Activated CD4-positive, alpha-beta memory T cell treated with anti-CD3 and anti-CD28 coated beads, Interleukin-2, amount 10 ng/mL, durations not matched to agents 7 days and 5 days (primary cell): ENCODE measurements at regions of chr20 and their contacts with region 1.

Region 1: GRCh38 chr20:46022411-46023147 is 6.4 kb upstream of the SLC12A5 start:
- DNase-seq: peak; percentile 77
- H3K4me3 Mint-ChIP-seq: peak overlapping the region; percentile 59
- H3K27ac Mint-ChIP-seq: no peak overlapping the region
- H3K4me1 Mint-ChIP-seq: peaks cover 24% of the 10 kb centered on the region
- H3K27me3 Mint-ChIP-seq: peaks cover 49% of the 10 kb centered on the region

Region 2: DNA sequence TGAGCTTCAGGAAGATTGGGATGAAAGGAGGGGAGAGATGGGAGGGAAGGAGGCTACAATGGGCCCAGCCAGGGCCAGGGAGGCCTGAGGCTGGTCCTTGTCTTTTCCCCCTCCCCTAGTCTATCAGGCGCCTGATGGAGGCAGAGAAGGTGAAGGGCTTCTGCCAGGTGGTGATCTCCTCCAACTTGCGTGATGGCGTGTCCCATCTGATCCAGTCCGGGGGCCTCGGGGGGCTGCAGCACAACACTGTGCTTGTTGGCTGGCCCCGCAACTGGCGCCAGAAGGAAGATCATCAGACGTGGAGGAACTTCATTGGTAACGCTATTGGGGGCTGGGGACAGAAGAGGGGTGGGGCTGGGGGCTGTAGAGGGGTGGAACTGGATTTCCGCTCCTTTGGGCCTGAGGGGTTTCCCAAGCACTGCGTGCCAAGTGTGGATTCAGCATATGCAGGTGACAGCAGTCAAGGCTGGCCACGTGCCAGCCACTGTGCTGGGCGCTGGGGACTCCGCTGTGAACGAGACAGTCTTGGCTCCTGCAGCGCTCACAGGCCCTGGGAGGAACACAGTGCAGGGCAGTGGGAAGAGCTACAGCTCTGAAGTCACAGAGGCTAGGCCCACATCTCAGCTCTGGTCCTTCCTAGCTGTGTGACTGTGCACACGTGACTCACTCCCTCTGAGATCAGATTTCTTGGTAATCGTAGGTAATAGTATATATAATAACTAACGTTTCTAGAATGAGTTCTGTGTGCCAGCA is 29.2 kb after region 1 on chr20:
- CTCF ChIA-PET with region 1: no interaction called
- POLR2A ChIA-PET with region 1: no interaction called
- DNase-seq: no peak
- H3K4me3 Mint-ChIP-seq: no peak overlapping the region
- H3K27ac Mint-ChIP-seq: no peak overlapping the region
- H3K4me1 Mint-ChIP-seq: no peaks in the 10 kb centered on the region
- H3K27me3 Mint-ChIP-seq: peaks cover 24% of the 10 kb centered on the region

Region 3: DNA sequence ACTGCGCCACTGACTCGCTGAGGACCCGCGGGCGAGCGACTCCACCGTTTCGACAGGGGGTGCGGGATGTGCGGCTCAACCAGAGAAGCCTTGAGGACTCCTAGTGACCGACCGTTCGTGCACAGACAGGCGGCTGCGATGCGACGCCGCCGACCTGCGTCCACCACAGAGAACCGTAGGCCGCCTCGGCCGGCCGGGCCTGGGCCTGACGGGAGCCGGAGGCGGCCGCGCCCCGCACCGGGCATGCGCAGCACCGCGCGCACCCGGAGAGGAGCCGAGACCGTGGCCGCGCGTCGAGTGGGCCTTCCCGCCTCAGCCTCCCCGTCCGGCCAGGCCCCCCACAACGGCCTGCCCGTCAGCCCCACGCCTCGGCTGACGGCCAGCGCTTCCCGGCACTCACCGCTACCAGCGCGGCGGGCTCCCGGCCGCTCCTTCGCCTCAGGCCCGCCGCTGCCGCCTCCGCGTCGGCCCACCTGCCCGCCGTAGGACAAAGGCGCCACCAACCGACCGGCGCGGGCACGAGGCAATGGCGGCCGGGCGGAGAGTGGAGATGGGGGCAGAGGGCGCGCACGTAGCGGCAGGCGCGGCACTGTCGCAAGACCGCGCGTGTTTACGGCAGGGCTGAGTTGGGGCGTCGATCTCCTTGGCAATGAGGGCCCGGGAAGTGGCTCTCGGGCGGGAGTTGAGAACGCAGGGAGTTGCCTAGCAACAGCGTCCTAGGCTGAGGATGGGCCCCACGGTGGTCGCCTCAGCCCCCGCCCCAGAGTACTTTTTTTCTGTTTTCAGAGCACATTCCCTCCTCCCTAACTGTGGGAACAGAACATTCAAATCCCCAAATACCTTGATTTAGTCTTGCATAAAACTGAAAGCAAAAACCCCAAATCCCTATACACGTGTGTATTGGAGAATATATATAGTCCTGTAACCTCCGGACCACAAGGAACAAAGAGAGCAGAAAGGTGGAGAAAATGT is 67.1 kb after region 1 on chr20 and contains the start of gene NCOA5:
- CTCF ChIA-PET with region 1: interaction called, 16 read pairs
- POLR2A ChIA-PET with region 1: no interaction called
- DNase-seq: peak; percentile 96
- H3K4me3 Mint-ChIP-seq: peak within 1 kb of the TSS; percentile 84
- H3K27ac Mint-ChIP-seq: peak within 1 kb of the TSS; percentile 82
- H3K4me1 Mint-ChIP-seq: peaks cover 35% of the 10 kb centered on the region
- H3K27me3 Mint-ChIP-seq: no peaks in the 10 kb centered on the region
- total RNA-seq, gene NCOA5: 24.6 to 26.3 TPM

Region 4: DNA sequence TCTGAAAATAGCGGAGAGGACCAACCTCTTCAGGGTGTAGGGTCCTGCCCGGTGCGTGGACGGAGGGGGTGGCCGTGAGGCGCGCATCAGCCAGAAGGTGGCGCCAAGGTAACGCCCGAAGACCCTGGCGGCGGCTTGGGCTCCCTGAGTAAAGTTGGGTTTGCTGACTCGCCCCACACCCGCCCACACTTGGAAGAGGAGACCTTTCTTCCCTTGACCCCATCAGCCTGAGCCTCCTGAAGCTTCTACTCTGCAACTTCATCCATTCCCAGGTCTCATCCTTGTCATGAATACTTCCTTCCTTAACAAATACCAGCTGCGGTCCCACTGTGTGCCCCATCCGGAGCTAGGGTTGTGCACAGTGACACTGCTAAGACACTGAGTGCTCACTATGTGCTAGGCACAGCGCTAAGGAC is 110.1 kb after region 1 on chr20:
- CTCF ChIA-PET with region 1: no interaction called
- POLR2A ChIA-PET with region 1: no interaction called
- DNase-seq: peak; percentile 54
- H3K4me3 Mint-ChIP-seq: no peak overlapping the region
- H3K27ac Mint-ChIP-seq: no peak overlapping the region
- H3K4me1 Mint-ChIP-seq: no peaks in the 10 kb centered on the region
- H3K27me3 Mint-ChIP-seq: peaks cover 20% of the 10 kb centered on the region

Region 5: DNA sequence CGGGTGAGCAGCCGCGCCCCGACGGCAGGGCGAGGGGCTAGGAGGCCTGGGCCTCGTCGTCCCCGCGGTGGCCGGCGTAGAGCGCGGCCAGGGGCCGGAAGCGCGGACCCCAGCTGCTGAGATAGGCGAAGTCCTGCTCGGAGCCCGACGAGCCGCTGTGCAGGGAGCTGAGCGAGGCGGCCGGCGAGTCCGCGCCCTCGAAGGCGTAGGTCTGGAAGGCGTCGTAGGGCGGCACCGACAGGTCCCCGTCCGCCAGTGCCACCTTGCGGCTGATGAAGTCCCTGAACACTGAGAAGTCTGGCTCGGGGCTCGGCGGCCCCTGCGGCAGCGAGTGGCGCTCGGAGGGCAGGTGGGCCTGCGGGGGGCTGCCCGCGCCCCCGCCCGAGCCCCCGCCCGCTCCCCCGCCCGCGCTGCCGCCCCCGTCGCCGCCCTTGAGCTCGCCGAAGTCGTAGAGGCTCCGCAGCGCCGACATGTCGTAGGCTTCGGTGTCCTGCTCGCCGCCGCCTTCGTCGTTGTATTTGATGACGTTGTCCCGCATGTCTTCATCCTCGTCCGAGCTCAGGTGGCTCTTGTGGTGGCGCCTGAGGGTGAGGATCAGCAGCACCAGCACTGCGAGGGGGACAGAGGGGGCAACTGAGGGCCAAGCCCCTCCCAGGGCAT is 152.0 kb after region 1 on chr20:
- CTCF ChIA-PET with region 1: interaction called, 12 read pairs
- POLR2A ChIA-PET with region 1: no interaction called
- DNase-seq: peak; percentile 70
- H3K4me3 Mint-ChIP-seq: no peak overlapping the region
- H3K27ac Mint-ChIP-seq: no peak overlapping the region
- H3K4me1 Mint-ChIP-seq: no peaks in the 10 kb centered on the region
- H3K27me3 Mint-ChIP-seq: peaks cover 44% of the 10 kb centered on the region